Activated naive CD4-positive, alpha-beta T cell treated with anti-CD3 and anti-CD28 coated beads for 36 hours (primary cell): ENCODE measurements at regions of chr5 and their contacts with region 1.

Region 1: DNA sequence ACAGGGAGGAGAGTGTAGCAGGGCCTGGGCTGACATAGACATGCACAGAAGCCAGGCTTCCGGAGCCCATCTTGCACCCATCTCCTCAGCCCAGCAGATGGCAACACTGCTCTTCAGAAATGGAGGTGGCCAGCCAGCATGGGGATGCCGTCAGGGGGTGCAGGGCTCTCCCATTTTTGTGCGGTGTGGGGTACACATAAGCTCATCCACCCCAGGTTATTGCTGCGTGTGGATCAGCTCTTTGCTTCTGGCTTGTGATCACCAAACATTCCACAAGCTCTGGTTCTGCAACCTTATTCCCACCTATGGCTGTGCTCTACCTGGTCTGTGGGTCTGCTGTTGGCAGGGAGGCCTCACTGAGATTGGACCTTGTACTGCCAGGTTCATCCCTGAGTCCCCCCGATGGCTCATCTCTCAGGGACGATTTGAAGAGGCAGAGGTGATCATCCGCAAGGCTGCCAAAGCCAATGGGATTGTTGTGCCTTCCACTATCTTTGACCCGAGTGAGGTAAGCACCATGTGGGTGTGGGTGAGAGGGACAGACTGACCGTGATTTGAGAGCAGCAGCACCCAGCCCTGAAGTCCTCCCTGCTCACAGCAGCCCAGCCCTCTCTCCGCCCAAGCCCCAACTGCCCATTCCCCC is 17.3 kb downstream of the SLC22A5 start:
- DNase-seq: peak; percentile 88
- H3K4me3 Mint-ChIP-seq: no peak overlapping the region
- H3K27ac Mint-ChIP-seq: peak overlapping the region; percentile 69
- H3K4me1 Mint-ChIP-seq: peaks cover 40% of the 10 kb centered on the region
- H3K27me3 Mint-ChIP-seq: no peaks in the 10 kb centered on the region

Region 2: DNA sequence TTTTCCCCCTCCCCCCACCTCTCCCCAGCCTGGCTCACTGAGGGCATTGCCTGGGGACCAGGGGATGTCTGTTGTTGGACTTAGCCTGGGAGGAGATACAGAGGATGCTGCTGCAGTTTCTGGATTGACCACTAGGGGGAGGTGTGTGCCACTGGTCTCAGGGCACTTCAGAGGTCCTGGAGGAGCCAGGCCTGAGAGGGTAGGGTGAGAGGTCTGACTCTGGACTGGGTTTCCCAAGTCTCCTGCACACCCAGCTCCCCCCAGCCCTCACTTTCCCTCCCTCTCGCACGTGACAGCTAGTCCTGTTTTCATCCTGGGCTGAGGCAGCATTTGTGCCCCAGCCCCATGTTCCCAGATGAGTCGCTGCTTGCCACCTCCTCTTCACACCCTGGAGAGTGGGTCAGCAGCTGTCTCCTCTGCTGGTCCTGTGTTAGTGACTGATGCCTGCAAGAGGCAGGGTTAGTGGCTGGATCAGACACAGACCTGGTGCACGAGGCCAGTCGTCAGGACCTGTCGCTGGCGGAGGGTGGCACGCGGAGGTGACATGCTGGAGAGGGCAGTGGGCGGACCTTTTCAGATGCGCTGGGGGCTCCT is 321.9 kb before region 1 on chr5:
- CTCF ChIA-PET with region 1: interaction called, 3 read pairs
- intact Hi-C with region 1: loop called (anchors 1 kb)
- DNase-seq: peak; percentile 91
- H3K4me3 Mint-ChIP-seq: no peak overlapping the region
- H3K27ac Mint-ChIP-seq: no peak overlapping the region
- H3K4me1 Mint-ChIP-seq: peaks cover 13% of the 10 kb centered on the region
- H3K27me3 Mint-ChIP-seq: no peaks in the 10 kb centered on the region

Region 3: GRCh38 chr5:132103332-132103951 is 283.3 kb before region 1 on chr5:
- CTCF ChIA-PET with region 1: no interaction called
- intact Hi-C with region 1: no loop called
- DNase-seq: peak; percentile 84
- H3K4me3 Mint-ChIP-seq: no peak overlapping the region
- H3K27ac Mint-ChIP-seq: peak overlapping the region; percentile 73
- H3K4me1 Mint-ChIP-seq: peaks cover 60% of the 10 kb centered on the region
- H3K27me3 Mint-ChIP-seq: no peaks in the 10 kb centered on the region

Region 4: DNA sequence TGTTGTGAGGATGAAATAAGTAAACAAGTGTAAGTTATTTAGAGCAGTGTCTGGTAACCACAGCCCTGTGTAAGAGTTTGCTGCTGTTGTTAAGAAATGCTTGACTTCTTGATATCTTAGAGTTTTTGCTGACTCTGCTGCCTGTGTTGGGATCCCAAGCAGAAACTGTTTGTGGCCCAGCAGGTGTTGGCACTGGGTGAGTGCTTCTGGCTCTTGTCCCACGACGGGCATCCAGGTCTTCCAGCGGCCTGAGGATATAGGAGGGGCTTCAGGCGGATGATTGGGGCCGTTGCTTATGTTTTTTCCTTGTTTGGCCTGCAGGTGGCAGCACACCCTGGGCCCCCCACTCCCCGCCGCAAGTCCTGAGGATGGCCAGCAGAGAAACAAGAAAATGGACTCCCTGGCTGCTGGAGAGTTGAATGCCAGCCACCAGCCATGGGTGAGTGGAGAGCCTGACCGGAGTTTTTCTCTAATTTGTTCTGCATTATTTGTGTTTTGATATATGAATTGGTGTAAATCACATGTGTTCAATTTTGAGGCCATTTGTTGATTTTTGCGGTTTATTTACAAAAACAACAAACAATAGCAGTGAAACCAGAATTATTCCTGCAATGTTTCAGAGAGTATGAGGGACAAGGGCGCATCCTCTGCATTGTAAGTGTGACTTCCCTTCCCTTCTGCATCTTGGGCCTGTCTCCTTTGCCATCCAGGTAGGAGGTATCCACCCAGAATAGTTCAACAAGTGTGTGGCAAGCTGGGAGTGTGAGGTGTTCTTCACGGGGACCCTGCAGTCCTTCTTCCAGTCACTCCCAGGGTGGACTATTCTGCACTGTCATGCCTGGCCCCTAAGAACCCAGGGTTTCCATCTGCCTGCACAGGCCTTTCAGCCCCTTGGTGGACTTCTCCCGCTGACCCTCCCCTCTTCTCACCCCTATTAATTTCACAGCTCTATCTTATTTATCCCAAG is 33.0 kb after region 1 on chr5:
- CTCF ChIA-PET with region 1: interaction called, 13 read pairs
- intact Hi-C with region 1: no loop called
- DNase-seq: peak; percentile 67
- H3K4me3 Mint-ChIP-seq: peak overlapping the region; percentile 14
- H3K27ac Mint-ChIP-seq: peak overlapping the region; percentile 86
- H3K4me1 Mint-ChIP-seq: peaks cover 87% of the 10 kb centered on the region
- H3K27me3 Mint-ChIP-seq: no peaks in the 10 kb centered on the region

Region 5: GRCh38 chr5:132490486-132491367 is 104.0 kb after region 1 on chr5 and contains the start of gene IRF1:
- CTCF ChIA-PET with region 1: interaction called, 466 read pairs
- intact Hi-C with region 1: no loop called
- DNase-seq: peak; percentile 98
- H3K4me3 Mint-ChIP-seq: peak within 1 kb of the TSS; percentile 91
- H3K27ac Mint-ChIP-seq: peak within 1 kb of the TSS; percentile 97
- H3K4me1 Mint-ChIP-seq: peaks cover 64% of the 10 kb centered on the region
- H3K27me3 Mint-ChIP-seq: no peaks in the 10 kb centered on the region
- total RNA-seq, gene IRF1: 84.3 to 88.4 TPM

Region 6: DNA sequence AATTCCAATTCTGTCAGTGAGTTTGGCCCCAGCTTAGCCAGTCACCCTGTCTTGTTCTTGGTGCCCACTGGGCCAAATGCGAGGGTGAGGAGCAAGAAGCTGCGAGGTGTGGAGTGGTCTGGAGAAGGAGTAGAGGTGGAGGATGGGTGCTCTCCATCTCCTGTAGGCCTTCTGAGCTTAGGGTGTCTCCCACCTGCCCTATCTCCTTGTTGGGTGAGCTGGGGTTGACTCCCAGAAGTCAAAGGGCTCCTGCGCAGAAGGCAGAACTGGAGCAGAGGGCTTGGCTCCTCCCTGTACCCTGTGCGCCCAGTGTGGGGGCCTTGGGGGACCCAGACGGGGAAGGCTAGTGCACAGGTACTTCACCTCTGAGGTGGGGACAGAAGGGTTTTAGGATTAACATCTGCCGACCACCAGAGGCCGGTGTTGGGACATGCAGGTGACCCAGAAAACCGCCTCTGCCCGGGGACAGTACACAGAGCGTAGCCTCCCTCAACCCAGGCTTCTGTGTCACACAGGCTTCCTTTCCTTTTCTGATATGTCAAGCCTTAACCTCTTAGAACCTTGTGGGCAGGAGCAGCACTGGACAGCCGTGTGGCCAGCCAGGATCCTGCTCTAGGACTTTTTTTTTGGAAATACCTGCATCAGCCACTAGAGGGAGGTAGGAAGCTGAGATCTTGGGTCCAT is 139.7 kb after region 1 on chr5:
- CTCF ChIA-PET with region 1: interaction called, 12 read pairs
- intact Hi-C with region 1: loop called (anchors 1 kb)
- DNase-seq: peak; percentile 52
- H3K4me3 Mint-ChIP-seq: no peak overlapping the region
- H3K27ac Mint-ChIP-seq: no peak overlapping the region
- H3K4me1 Mint-ChIP-seq: peaks cover 29% of the 10 kb centered on the region
- H3K27me3 Mint-ChIP-seq: peaks cover 4% of the 10 kb centered on the region

Region 7: GRCh38 chr5:132866342-132867045 is 479.7 kb after region 1 on chr5 and contains the starts of genes GDF9 and UQCRQ:
- CTCF ChIA-PET with region 1: no interaction called
- intact Hi-C with region 1: loop called (anchors 1 kb)
- DNase-seq: peak; percentile 96
- H3K4me3 Mint-ChIP-seq: peak within 1 kb of the TSS; percentile 99
- H3K27ac Mint-ChIP-seq: peak within 1 kb of the TSS; percentile 97
- H3K4me1 Mint-ChIP-seq: peaks cover 27% of the 10 kb centered on the region
- H3K27me3 Mint-ChIP-seq: no peaks in the 10 kb centered on the region
- total RNA-seq, gene GDF9: 0.64 to 1.2 TPM
- total RNA-seq, gene UQCRQ: 677 to 784 TPM